Gastrocnemius medialis (tissue), 4 donors: ENCODE measurements at regions of chr12 and their contacts with region 1.

Region 1: DNA sequence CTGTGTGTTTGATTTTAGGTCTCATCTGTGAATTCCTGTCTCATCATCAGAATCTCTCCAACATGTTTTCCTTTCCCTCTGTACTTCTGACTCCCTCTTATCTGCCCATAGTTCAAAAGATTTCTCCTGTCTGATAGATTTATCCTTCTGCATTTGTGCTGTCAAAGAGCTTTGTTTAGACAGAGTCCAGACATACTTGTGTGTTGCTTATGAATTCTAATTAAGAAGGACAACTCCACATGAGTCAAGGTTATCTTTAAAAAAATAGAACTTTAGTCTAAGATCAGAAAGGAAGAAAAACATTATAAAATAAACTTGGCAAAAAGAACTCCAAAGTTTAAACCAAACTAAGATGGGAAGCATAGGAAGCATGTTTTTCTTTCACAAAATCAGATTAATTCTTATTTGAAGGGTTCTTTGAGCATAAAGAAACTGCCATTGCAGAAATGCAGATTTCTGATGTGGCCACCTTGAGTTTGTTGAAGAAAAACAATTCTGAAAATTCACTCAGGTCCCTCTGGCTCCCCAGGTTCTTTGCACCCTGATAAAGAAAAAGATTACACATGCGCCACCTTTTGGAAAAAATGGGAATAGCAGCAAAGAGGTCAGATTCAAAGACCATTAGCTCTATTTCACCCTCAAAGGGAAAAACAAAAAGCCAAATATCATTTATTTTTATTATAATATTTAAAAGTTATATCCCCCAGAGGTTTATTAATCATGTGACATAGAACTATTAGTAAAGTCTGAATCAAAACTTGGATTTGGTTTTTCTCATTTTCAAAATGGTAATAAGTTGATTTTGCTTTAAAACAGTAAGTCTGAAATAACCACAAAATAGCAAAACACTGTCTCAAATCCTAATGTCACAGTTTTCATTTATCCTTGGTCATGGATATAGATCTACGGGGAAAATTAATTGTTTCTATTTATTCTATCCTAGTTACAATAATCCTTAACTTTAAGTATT is 143.7 kb upstream of the DCN start:
- DNase-seq: peak; percentile 7 to 12
- ATAC-seq: peak in 1 of 2 donors; percentile 36
- H3K4me3 ChIP-seq: no peak overlapping the region
- H3K27ac ChIP-seq: peak overlapping the region; percentile 7 to 41 (median 28)
- H3K4me1 ChIP-seq: peaks cover 3 to 4% of the 10 kb centered on the region in 2 donors
- H3K27me3 ChIP-seq: no peaks in the 10 kb centered on the region
- CTCF ChIP-seq: peak in 4 of 5 experiments; percentile 21 to 68 (median 52)
- POLR2A ChIP-seq: no peak

Region 2: DNA sequence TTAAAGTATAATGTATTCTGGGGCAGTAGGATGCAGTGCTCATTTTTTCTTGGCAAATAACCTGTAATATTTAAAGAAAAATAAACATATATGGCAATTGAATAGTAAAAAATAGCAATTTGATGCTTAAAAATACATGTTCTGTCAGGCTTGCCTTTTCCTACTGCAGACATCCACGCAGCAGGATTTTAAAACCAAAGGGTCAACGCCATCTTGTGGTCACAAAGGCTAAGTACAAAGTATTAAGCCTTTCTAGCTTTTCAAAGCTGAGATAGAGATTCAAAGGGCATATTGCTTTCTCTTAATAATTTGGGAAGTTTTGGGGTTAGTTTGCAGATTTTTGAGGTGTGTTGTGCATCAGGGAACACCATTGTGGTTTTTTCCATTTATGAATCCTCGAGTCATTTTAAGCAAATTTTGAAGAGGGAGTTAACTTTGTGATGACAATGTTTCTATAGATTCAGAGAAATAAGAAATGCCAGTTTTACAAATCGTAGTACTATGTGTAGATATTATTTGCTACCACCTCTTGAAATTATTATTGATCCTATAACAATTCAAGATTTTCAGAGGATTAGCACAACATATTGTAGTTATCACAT is 366.7 kb before region 1 on chr12:
- in situ Hi-C with region 1: loop called in 2 of 4 experiments (anchors 25 kb)
- intact Hi-C with region 1: no loop called
- DNase-seq: no peak
- ATAC-seq: peak in 1 of 2 donors; percentile 58
- H3K4me3 ChIP-seq: no peak overlapping the region
- H3K27ac ChIP-seq: no peak overlapping the region
- H3K4me1 ChIP-seq: no peaks in the 10 kb centered on the region
- H3K27me3 ChIP-seq: no peaks in the 10 kb centered on the region
- CTCF ChIP-seq: peak in 4 of 5 experiments; percentile 41 to 67 (median 54)
- POLR2A ChIP-seq: no peak

Region 3: GRCh38 chr12:90987520-90987919 is 338.8 kb before region 1 on chr12:
- in situ Hi-C with region 1: loop called in 1 of 4 experiments (anchors 10 kb)
- intact Hi-C with region 1: no loop called
- DNase-seq: no peak
- ATAC-seq: no peak
- H3K4me3 ChIP-seq: no peak overlapping the region
- H3K27ac ChIP-seq: no peak overlapping the region
- H3K4me1 ChIP-seq: no peaks in the 10 kb centered on the region
- H3K27me3 ChIP-seq: no peaks in the 10 kb centered on the region
- CTCF ChIP-seq: no peak
- POLR2A ChIP-seq: no peak

Region 4: GRCh38 chr12:91178139-91178561 is 148.2 kb before region 1 on chr12:
- in situ Hi-C with region 1: loop called in 2 of 4 experiments (anchors 10 kb)
- intact Hi-C with region 1: loop called (anchors 5 kb)
- DNase-seq: no peak
- ATAC-seq: no peak
- H3K4me3 ChIP-seq: peak overlapping the region; percentile 28 to 44 (median 38)
- H3K27ac ChIP-seq: peak overlapping the region; percentile 48 to 62 (median 57)
- H3K4me1 ChIP-seq: no peaks in the 10 kb centered on the region
- H3K27me3 ChIP-seq: no peaks in the 10 kb centered on the region
- CTCF ChIP-seq: peak in 3 of 5 experiments; percentile 7 to 23 (median 21)
- POLR2A ChIP-seq: no peak

Region 5: GRCh38 chr12:91877022-91877421 is 550.7 kb after region 1 on chr12:
- in situ Hi-C with region 1: no loop called
- intact Hi-C with region 1: no loop called
- DNase-seq: peak; percentile 6 to 36
- ATAC-seq: peak; percentile 42 to 53
- H3K4me3 ChIP-seq: no peak overlapping the region
- H3K27ac ChIP-seq: no peak overlapping the region
- H3K4me1 ChIP-seq: no peaks in the 10 kb centered on the region
- H3K27me3 ChIP-seq: no peaks in the 10 kb centered on the region
- CTCF ChIP-seq: no peak
- POLR2A ChIP-seq: no peak